Naive thymus-derived CD4-positive, alpha-beta T cell (primary cell): ENCODE measurements at regions of chr17 and their contacts with region 1.

Region 1: GRCh38 chr17:50853015-50853615 is 13.0 kb downstream of the TOB1 start:
- DNase-seq: no peak
- ATAC-seq: no peak
- H3K4me3 ChIP-seq: no peak overlapping the region
- H3K4me3 Mint-ChIP-seq: peak overlapping the region in 8 of 10 donors; percentile 75 to 89 (median 85)
- H3K27ac ChIP-seq: no peak overlapping the region
- H3K27ac Mint-ChIP-seq: peak overlapping the region in 7 of 9 donors; percentile 41 to 93 (median 88)
- H3K4me1 ChIP-seq: peaks cover 5 to 7% of the 10 kb centered on the region in 2 donors
- H3K4me1 Mint-ChIP-seq: peaks cover 18 to 40% (median 28%) of the 10 kb centered on the region in 7 donors
- H3K27me3 ChIP-seq: no peaks in the 10 kb centered on the region
- H3K27me3 Mint-ChIP-seq: peaks cover 0 to 32% (median 0%) of the 10 kb centered on the region in 5 donors

Region 2: DNA sequence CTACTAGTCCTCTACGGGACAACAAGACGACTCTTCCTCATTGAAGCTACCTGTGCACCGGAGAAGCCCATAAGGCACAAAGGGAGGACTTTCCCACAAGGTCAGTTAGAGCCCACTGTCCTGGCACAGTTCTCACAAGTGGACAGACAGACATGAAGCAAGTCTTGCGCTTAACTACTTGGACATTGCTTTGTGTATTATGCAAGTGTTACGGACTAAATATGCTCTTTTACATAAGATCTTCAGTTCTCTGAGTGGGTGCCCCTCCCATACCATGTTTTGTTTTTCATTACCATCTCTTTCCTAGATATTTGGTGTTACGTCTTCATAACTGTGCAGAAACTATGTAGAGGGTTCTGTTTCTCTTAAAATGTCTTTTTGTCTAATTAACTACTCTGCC is 103.9 kb before region 1 on chr17:
- CTCF ChIA-PET with region 1: no interaction called
- POLR2A ChIA-PET with region 1: no interaction called
- intact Hi-C with region 1: no loop called
- DNase-seq: no peak
- ATAC-seq: no peak
- H3K4me3 ChIP-seq: no peak overlapping the region
- H3K4me3 Mint-ChIP-seq: no peak overlapping the region
- H3K27ac ChIP-seq: no peak overlapping the region
- H3K27ac Mint-ChIP-seq: peak overlapping the region in 3 of 9 donors; percentile 28 to 73 (median 65)
- H3K4me1 ChIP-seq: no peaks in the 10 kb centered on the region
- H3K4me1 Mint-ChIP-seq: peaks cover 0 to 9% (median 4%) of the 10 kb centered on the region in 7 donors
- H3K27me3 ChIP-seq: no peaks in the 10 kb centered on the region
- H3K27me3 Mint-ChIP-seq: no peaks in the 10 kb centered on the region

Region 3: GRCh38 chr17:50872710-50873424 is 19.8 kb after region 1 on chr17:
- CTCF ChIA-PET with region 1: interaction called, 17 read pairs
- POLR2A ChIA-PET with region 1: interaction called, 282 read pairs
- intact Hi-C with region 1: no loop called
- DNase-seq: peak in 8 of 9 donors; percentile 38 to 68 (median 45)
- ATAC-seq: peak; percentile 78
- H3K4me3 ChIP-seq: no peak overlapping the region
- H3K4me3 Mint-ChIP-seq: peak overlapping the region in 8 of 10 donors; percentile 25 to 73 (median 56)
- H3K27ac ChIP-seq: peak overlapping the region; percentile 3
- H3K27ac Mint-ChIP-seq: peak overlapping the region in 7 of 9 donors; percentile 2 to 81 (median 69)
- H3K4me1 ChIP-seq: peaks cover 28 to 51% of the 10 kb centered on the region in 2 donors
- H3K4me1 Mint-ChIP-seq: peaks cover 25 to 63% (median 49%) of the 10 kb centered on the region in 7 donors
- H3K27me3 ChIP-seq: peaks cover 0 to 6% of the 10 kb centered on the region in 2 donors
- H3K27me3 Mint-ChIP-seq: peaks cover 0 to 28% (median 0%) of the 10 kb centered on the region in 5 donors

Region 4: DNA sequence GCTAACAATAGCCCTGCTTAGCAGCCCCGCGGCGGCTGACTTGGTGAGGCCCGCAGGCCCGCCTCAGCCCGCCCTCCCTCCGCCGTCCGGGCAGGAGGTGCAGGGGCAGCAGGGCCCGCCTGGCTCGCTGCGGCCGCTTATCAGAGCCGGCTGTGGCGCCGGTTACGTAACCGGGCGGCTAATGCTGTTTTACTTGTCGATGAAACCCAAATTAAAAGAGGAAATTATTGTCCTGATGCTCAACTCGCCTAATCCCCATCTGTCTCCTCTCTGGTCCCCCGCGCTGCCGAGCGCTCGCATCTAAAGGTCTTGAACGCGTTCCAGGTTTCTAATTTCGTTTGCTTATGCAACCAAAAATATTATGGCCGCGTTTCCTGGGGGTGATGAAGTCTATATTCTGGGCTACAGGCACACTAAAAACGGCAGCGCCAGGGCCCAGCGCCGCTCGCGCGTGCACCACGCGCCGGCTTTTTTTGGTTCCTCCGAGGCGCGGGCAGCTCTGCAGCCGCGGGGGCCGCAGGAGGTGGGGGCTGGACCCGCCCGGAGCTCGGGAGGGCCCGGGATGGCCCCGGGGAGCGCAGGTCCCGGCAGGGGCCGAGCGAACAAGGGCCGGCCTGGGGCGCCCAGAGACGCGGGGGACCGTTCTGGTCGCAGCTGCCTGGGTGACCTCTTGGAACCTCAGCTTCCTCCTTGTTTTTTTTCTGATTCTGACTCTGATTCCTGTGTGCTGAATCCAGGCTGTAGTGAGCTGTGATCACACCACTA is 78.2 kb after region 1 on chr17:
- CTCF ChIA-PET with region 1: interaction called, 9 read pairs
- POLR2A ChIA-PET with region 1: interaction called, 828 read pairs
- intact Hi-C with region 1: loop called in 1 of 2 experiments (anchors 1 kb)
- DNase-seq: peak in 8 of 9 donors; percentile 47 to 73 (median 60)
- ATAC-seq: peak; percentile 69
- H3K4me3 ChIP-seq: peak overlapping the region; percentile 69
- H3K4me3 Mint-ChIP-seq: peak overlapping the region; percentile 84 to 97 (median 92)
- H3K27ac ChIP-seq: peak overlapping the region; percentile 63
- H3K27ac Mint-ChIP-seq: peak overlapping the region; percentile 77 to 100 (median 96)
- H3K4me1 ChIP-seq: peaks cover 20 to 21% of the 10 kb centered on the region in 2 donors
- H3K4me1 Mint-ChIP-seq: peaks cover 17 to 53% (median 33%) of the 10 kb centered on the region in 7 donors
- H3K27me3 ChIP-seq: no peaks in the 10 kb centered on the region
- H3K27me3 Mint-ChIP-seq: peaks cover 0 to 25% (median 0%) of the 10 kb centered on the region in 5 donors

Region 5: GRCh38 chr17:50949989-50950881 is 97.1 kb after region 1 on chr17:
- CTCF ChIA-PET with region 1: interaction called, 393 read pairs
- POLR2A ChIA-PET with region 1: interaction called, 664 read pairs
- intact Hi-C with region 1: loop called in 1 of 2 experiments (anchors 1 kb)
- DNase-seq: peak; percentile 34 to 71 (median 51)
- ATAC-seq: peak; percentile 88
- H3K4me3 ChIP-seq: no peak overlapping the region
- H3K4me3 Mint-ChIP-seq: peak overlapping the region in 2 of 10 donors; percentile 5 to 62
- H3K27ac ChIP-seq: no peak overlapping the region
- H3K27ac Mint-ChIP-seq: peak overlapping the region in 5 of 9 donors; percentile 31 to 90 (median 69)
- H3K4me1 ChIP-seq: peaks cover 0 to 6% of the 10 kb centered on the region in 2 donors
- H3K4me1 Mint-ChIP-seq: peaks cover 14 to 39% (median 24%) of the 10 kb centered on the region in 7 donors
- H3K27me3 ChIP-seq: no peaks in the 10 kb centered on the region
- H3K27me3 Mint-ChIP-seq: no peaks in the 10 kb centered on the region

Region 6: GRCh38 chr17:51056813-51057510 is 203.8 kb after region 1 on chr17:
- CTCF ChIA-PET with region 1: interaction called, 5 read pairs
- POLR2A ChIA-PET with region 1: interaction called, 3 read pairs
- intact Hi-C with region 1: loop called (anchors 2 to 5 kb)
- DNase-seq: peak in 7 of 9 donors; percentile 23 to 55 (median 44)
- ATAC-seq: peak; percentile 75
- H3K4me3 ChIP-seq: no peak overlapping the region
- H3K4me3 Mint-ChIP-seq: no peak overlapping the region
- H3K27ac ChIP-seq: no peak overlapping the region
- H3K27ac Mint-ChIP-seq: peak overlapping the region in 1 of 9 donors; percentile 84
- H3K4me1 ChIP-seq: no peaks in the 10 kb centered on the region
- H3K4me1 Mint-ChIP-seq: peaks cover 4 to 16% (median 12%) of the 10 kb centered on the region in 7 donors
- H3K27me3 ChIP-seq: no peaks in the 10 kb centered on the region
- H3K27me3 Mint-ChIP-seq: no peaks in the 10 kb centered on the region